PC-3 (cell line): ENCODE measurements at regions of chr4 and their contacts with region 1.

Region 1: GRCh38 chr4:174365018-174365587 is 81.4 kb downstream of the CEP44 start:
- DNase-seq: peak; percentile 54
- ATAC-seq: no peak
- H3K4me3 ChIP-seq: no peak overlapping the region
- H3K27ac ChIP-seq: no peak overlapping the region
- H3K4me1 ChIP-seq: 0 out of 2 replicates have a peak, but pooled peaks cover 8% of the 10 kb centered on the region
- H3K27me3 ChIP-seq: no peaks in the 10 kb centered on the region
- CTCF ChIP-seq: peak; percentile 62; the same call in 1 of the 2 replicates

Region 2: DNA sequence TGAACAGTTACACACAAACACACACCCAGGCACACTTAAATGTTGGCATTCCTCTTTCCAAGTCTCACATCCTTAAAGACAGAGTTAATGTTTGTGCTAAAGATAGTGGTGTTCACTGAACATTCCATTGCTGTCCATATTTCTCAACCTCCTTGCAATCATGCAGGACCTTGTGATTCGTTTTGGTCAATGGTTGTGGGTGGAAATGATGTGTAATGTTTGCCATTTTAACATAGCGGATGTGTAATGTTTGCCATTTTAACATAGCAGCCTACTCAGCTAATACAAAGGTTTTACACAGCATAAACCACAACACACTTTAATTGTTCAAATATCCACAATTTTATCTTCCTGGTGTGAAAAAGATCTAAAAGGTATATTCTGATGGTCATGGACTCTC is 12.5 kb after region 1 on chr4:
- CTCF ChIA-PET with region 1: no interaction called
- POLR2A ChIA-PET with region 1: no interaction called
- intact Hi-C with region 1: no loop called
- DNase-seq: peak; percentile 87
- ATAC-seq: peak; percentile 98
- H3K4me3 ChIP-seq: no peak overlapping the region
- H3K27ac ChIP-seq: peak overlapping the region; percentile 74
- H3K4me1 ChIP-seq: peaks cover 18% of the 10 kb centered on the region
- H3K27me3 ChIP-seq: no peaks in the 10 kb centered on the region
- CTCF ChIP-seq: no peak

Region 3: GRCh38 chr4:174402470-174403176 is 37.5 kb after region 1 on chr4:
- CTCF ChIA-PET with region 1: no interaction called
- POLR2A ChIA-PET with region 1: no interaction called
- intact Hi-C with region 1: loop called (anchors 5 kb)
- DNase-seq: peak; percentile 63
- ATAC-seq: peak; percentile 68
- H3K4me3 ChIP-seq: no peak overlapping the region
- H3K27ac ChIP-seq: peak overlapping the region; percentile 79
- H3K4me1 ChIP-seq: peaks cover 43% of the 10 kb centered on the region
- H3K27me3 ChIP-seq: no peaks in the 10 kb centered on the region
- CTCF ChIP-seq: no peak

Region 4: GRCh38 chr4:174631901-174632758 is 267.0 kb after region 1 on chr4:
- CTCF ChIA-PET with region 1: no interaction called
- POLR2A ChIA-PET with region 1: no interaction called
- intact Hi-C with region 1: loop called (anchors 1 kb)
- DNase-seq: peak; percentile 50
- ATAC-seq: peak; percentile 39
- H3K4me3 ChIP-seq: no peak overlapping the region
- H3K27ac ChIP-seq: 0 out of 2 replicates have a peak overlapping the region, but pooled peaks have one; percentile 12
- H3K4me1 ChIP-seq: peaks cover 45% of the 10 kb centered on the region
- H3K27me3 ChIP-seq: no peaks in the 10 kb centered on the region
- CTCF ChIP-seq: peak; percentile 88

Region 5: DNA sequence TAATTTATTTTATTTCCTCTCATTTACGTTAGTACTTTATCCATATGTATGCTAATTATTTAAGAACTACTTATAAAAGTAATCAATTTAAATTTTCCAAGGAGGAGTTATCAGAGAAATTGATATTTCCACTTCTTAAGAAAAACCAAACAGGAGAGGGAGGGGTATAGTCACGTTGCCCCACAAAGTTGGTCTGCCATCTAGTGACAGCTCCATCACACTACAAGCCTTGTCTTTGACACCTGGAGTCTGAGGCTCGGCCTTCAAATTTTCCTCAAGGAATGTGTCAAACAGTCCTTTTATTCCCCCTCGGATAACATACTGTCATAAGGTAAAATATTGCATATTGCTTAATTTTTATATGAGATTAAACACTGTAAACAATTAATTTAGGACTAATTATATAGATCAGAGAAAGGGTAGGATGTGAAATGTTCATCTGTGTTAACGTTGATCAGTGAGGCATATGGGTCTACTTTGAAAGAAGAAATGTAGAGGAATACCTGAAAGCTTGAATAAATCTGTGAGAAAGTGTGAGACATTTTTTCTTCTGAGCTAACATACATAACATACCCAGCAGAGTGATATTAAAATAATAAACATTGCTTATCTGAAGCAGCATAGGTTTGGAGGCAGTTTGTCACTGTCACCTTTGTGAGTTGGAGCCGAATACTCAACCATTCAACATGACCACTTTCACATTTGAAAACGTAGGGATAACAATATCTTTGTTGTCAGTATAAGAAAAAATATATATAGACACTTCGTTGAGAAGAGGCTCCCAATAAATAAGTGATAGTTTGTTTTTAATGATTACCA is 349.5 kb after region 1 on chr4:
- CTCF ChIA-PET with region 1: no interaction called
- POLR2A ChIA-PET with region 1: no interaction called
- intact Hi-C with region 1: loop called (anchors 1 kb)
- DNase-seq: peak; percentile 68
- ATAC-seq: peak; percentile 60; the same call in 1 of the 2 replicates
- H3K4me3 ChIP-seq: no peak overlapping the region
- H3K27ac ChIP-seq: no peak overlapping the region
- H3K4me1 ChIP-seq: peaks cover 16% of the 10 kb centered on the region
- H3K27me3 ChIP-seq: no peaks in the 10 kb centered on the region
- CTCF ChIP-seq: peak; percentile 79